Endothelial cell of umbilical vein (primary cell): ENCODE measurements at regions of chr14 and their contacts with region 1.

Region 1: GRCh38 chr14:49867831-49868723 is 15.5 kb upstream of the NEMF start:
- DNase-seq: peak; percentile 95
- H3K4me3 ChIP-seq: peak overlapping the region; percentile 43 to 69 (median 50)
- H3K27ac ChIP-seq: peak overlapping the region; percentile 64
- H3K4me1 ChIP-seq: peaks cover 17% of the 10 kb centered on the region
- H3K27me3 ChIP-seq: no peaks in the 10 kb centered on the region
- CTCF ChIP-seq: no peak
- POLR2A ChIP-seq: peak; percentile 87

Region 2: DNA sequence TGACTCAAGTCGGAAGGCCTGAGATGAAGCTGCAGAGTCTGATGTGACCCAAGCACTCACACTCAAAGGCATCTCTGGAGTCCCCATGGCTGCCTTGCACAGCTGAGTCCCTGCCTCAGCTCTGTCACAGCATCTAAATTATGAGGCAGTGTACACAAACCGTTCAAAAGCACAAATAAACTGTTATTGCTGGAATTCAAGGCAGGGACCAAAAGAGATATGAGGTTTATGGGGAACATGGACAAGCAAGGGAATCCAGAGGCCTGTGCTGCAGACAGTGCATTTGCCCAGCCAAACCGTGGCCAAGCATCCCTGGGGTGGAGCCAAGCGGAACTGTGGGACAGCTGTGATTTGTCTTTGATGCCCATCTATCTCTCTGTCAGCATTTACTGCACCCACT is 373.2 kb before region 1 on chr14:
- CTCF ChIA-PET with region 1: no interaction called
- POLR2A ChIA-PET with region 1: no interaction called
- dilution Hi-C with region 1: no loop called
- intact Hi-C with region 1: no loop called
- DNase-seq: no peak
- H3K4me3 ChIP-seq: no peak overlapping the region
- H3K27ac ChIP-seq: no peak overlapping the region
- H3K4me1 ChIP-seq: no peaks in the 10 kb centered on the region
- H3K27me3 ChIP-seq: peaks cover 4 to 6% of the 10 kb centered on the region in 2 experiments
- CTCF ChIP-seq: no peak
- POLR2A ChIP-seq: no peak

Region 3: DNA sequence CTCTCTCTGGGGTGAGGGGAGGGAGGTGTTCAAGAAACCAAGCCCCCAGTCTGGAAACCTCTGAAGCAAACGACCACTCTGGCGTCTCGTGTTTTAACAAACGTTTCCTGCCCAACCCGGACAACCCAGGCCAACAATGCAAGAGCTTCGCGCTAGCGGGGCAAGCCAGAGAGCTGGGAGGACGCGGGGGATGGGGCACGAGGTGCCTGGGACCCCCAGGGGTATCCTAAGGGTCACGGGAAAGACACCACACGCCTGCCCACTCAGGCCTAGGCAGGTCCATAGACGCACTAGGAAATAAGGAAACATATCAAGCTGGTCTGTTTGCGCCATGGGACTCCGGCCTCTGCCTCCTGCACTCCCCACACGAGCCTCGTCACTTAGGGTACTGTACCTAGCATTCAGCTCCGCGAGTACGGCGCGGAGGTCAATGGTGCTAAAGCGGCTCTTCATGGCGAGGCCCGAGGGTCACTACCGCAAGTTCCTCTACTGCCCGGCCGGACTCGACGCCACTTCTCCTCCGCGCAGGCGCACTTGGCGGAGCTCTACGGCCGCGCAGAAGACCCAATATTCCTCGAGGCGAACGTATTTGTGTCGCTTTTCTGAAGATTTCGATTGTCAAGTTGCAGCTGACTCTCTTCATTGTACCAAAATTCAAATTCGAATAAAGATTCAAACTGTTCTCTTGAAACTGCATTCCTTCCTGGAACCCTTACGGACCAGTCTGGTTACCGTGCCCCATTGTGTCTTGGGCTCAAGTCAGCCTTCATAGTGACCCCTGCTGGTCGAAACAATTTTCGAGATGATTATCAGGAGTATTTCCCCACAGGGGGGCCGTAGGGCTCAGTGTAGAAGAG is 15.5 kb before region 1 on chr14 and contains the start of gene NEMF:
- CTCF ChIA-PET with region 1: interaction called, 121 read pairs
- POLR2A ChIA-PET with region 1: interaction called, 9 read pairs
- dilution Hi-C with region 1: no loop called
- intact Hi-C with region 1: no loop called
- DNase-seq: peak; percentile 94
- H3K4me3 ChIP-seq: peak within 1 kb of the TSS; percentile 92 to 97 (median 94)
- H3K27ac ChIP-seq: peak within 1 kb of the TSS; percentile 83
- H3K4me1 ChIP-seq: peaks cover 11% of the 10 kb centered on the region
- H3K27me3 ChIP-seq: no peaks in the 10 kb centered on the region
- CTCF ChIP-seq: peak; percentile 68 to 87
- POLR2A ChIP-seq: peak; percentile 89
- total RNA-seq, gene NEMF: 71.4 and 74.2 TPM in 2 replicates

Region 4: DNA sequence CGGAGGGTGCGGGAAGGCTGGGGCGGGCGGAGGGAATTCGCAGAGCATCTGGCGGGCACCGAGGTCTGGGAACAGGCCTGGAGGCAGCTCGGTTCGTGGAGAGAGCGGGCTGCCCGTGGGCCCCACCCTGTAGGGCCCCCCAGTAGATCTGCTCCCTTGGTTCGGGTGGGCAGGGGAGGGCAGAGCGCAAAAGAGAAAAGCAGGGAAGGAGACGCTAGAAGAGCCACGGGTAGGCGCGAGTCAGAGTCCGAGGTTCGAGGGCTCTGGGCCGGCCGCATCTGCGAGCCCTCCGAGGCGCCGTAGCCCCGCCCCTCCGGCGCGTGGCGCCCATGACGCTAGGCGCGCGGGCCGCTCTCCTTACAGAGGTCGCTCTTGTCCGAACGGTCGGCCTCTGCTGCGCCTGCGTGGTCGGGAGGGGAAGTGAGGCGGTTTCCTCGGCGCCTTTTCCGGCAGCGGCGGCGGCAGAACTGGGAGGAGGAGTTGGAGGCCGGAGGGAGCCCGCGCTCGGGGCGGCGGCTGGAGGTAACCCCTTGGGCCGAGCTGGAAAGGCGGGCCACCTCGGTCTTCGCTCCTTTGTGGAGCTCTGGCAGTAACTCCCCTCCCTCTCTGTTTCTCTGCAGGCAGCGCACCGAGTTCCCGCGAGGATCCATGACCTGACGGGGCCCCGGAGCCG is 24.7 kb after region 1 on chr14 and contains the start of gene ARF6:
- CTCF ChIA-PET with region 1: interaction called, 14 read pairs
- POLR2A ChIA-PET with region 1: no interaction called
- dilution Hi-C with region 1: no loop called
- intact Hi-C with region 1: loop called (anchors 1 kb)
- DNase-seq: peak; percentile 97
- H3K4me3 ChIP-seq: peak within 1 kb of the TSS; percentile 27 to 92 (median 70)
- H3K27ac ChIP-seq: peak within 1 kb of the TSS; percentile 98
- H3K4me1 ChIP-seq: peaks cover 31% of the 10 kb centered on the region
- H3K27me3 ChIP-seq: no peaks in the 10 kb centered on the region
- CTCF ChIP-seq: no peak
- POLR2A ChIP-seq: peak; percentile 91
- total RNA-seq, gene ARF6: 73.2 and 73.6 TPM in 2 replicates

Region 5: GRCh38 chr14:50099335-50099734 is 231.3 kb after region 1 on chr14:
- CTCF ChIA-PET with region 1: interaction called, 242 read pairs
- POLR2A ChIA-PET with region 1: interaction called, 3 read pairs
- dilution Hi-C with region 1: loop called (anchors 10 kb)
- intact Hi-C with region 1: no loop called
- DNase-seq: no peak
- H3K4me3 ChIP-seq: no peak overlapping the region
- H3K27ac ChIP-seq: no peak overlapping the region
- H3K4me1 ChIP-seq: no peaks in the 10 kb centered on the region
- H3K27me3 ChIP-seq: no peaks in the 10 kb centered on the region
- CTCF ChIP-seq: no peak
- POLR2A ChIP-seq: no peak

Region 6: GRCh38 chr14:50116181-50116956 is 248.3 kb after region 1 on chr14 and contains the start of gene VCPKMT:
- CTCF ChIA-PET with region 1: interaction called, 22 read pairs
- POLR2A ChIA-PET with region 1: interaction called, 7 read pairs
- dilution Hi-C with region 1: no loop called
- intact Hi-C with region 1: no loop called
- DNase-seq: peak; percentile 95
- H3K4me3 ChIP-seq: peak within 1 kb of the TSS; percentile 72 to 99 (median 78)
- H3K27ac ChIP-seq: peak within 1 kb of the TSS; percentile 73
- H3K4me1 ChIP-seq: peaks cover 17% of the 10 kb centered on the region
- H3K27me3 ChIP-seq: no peaks in the 10 kb centered on the region
- CTCF ChIP-seq: no peak
- POLR2A ChIP-seq: peak; percentile 93
- total RNA-seq, gene VCPKMT: 6.9 and 9.2 TPM in 2 replicates

Region 7: DNA sequence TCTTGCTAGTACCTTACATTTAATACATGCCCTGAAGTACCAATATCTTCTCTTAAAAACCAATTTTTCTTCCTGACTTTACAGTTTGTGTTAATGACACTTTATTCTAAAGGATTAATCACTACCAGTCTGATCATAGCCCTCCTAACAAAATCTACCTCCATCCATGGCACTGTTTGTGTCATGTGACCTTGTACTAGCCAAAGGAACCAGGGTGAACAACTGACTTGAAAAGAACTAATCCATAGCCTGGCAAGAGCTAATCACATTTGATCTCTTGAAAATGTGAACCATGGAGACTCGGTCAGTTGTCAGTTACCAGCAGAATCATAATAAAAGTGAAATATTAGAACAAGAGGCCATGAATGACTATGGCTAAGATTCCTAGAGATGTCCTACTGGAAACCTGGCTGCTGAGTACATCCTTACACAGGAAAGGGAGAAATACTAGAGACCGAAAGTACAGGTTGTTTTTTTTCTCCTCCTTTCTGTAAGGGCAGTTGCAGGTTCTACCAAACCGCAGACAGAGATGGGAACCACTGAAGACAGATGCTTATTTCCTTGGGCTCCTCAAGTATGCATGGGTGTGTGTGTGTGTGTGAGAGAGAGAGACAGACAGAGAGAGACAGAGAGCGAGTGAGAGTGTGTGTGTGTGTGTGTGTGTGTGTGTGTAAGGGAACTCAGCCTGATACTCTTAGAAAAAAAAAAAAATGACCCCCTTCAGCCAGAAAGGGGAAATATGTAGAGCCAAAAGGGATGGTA is 621.6 kb after region 1 on chr14:
- CTCF ChIA-PET with region 1: no interaction called
- POLR2A ChIA-PET with region 1: no interaction called
- dilution Hi-C with region 1: no loop called
- intact Hi-C with region 1: no loop called
- DNase-seq: no peak
- H3K4me3 ChIP-seq: no peak overlapping the region
- H3K27ac ChIP-seq: no peak overlapping the region
- H3K4me1 ChIP-seq: no peaks in the 10 kb centered on the region
- H3K27me3 ChIP-seq: no peaks in the 10 kb centered on the region
- CTCF ChIP-seq: no peak
- POLR2A ChIP-seq: no peak